Gastrocnemius medialis (tissue), 4 donors: ENCODE measurements at regions of chr5 and their contacts with region 1.

Region 1: DNA sequence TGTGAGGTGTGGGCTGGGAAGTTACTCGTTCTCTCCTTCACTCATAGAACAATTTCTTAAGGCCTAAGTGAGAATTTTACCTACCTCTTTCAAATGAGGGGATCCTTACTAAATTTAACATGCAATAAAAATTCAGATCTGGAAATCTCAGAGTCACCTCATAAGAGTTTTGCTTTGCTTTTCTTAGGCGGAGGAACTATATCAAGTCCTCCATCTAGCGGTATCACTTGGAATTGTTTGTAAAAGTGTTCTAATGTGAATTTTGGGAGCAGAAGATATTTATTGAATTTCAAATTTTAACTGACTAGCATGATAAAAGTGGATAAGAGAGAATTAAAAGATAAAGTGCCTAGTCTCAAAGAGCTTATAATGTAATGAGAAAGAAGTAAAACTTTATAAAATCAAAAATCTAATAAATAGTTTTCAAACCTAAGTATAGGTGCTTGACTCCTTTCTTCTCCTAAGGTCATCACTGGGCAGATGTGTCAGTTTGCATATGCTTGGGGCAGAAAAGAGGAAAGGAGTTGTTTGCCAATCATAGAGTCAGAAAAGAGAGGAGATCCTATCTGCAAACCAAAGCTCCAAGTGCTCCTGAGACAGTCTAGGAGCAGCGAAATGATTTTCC is 145.7 kb upstream of the DAB2 start:
- DNase-seq: no peak
- ATAC-seq: no peak
- H3K4me3 ChIP-seq: no peak overlapping the region
- H3K27ac ChIP-seq: no peak overlapping the region
- H3K4me1 ChIP-seq: no peaks in the 10 kb centered on the region
- H3K27me3 ChIP-seq: no peaks in the 10 kb centered on the region
- CTCF ChIP-seq: peak in 4 of 5 experiments; percentile 41 to 63 (median 52)
- POLR2A ChIP-seq: no peak

Region 2: DNA sequence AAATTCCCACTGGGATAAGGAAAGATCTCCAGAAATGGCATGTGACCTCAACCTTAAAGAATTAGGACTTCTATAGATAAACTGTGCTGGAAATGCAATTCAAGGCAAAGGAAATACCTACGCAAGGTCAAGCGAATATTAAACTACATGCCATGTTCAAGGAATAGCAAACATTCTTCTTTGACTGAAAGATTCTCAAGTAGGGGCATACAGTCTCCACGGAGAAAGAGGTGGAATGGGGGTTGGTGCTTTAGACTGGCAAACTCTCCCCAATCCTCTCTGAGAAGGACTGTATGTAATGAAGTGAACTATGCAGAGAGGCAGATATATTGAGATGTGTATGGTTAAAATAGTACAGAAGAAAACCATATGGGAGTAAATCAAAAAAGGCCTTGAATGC is 502.4 kb before region 1 on chr5:
- in situ Hi-C with region 1: no loop called
- intact Hi-C with region 1: loop called (anchors 5 kb)
- DNase-seq: no peak
- ATAC-seq: no peak
- H3K4me3 ChIP-seq: no peak overlapping the region
- H3K27ac ChIP-seq: no peak overlapping the region
- H3K4me1 ChIP-seq: peaks cover 58 to 64% of the 10 kb centered on the region in 2 donors
- H3K27me3 ChIP-seq: no peaks in the 10 kb centered on the region
- CTCF ChIP-seq: no peak
- POLR2A ChIP-seq: no peak

Region 3: GRCh38 chr5:39543335-39543734 is 27.2 kb before region 1 on chr5:
- in situ Hi-C with region 1: no loop called
- intact Hi-C with region 1: no loop called
- DNase-seq: no peak
- ATAC-seq: no peak
- H3K4me3 ChIP-seq: no peak overlapping the region
- H3K27ac ChIP-seq: no peak overlapping the region
- H3K4me1 ChIP-seq: peaks cover 0 to 3% of the 10 kb centered on the region in 2 donors
- H3K27me3 ChIP-seq: no peaks in the 10 kb centered on the region
- CTCF ChIP-seq: no peak
- POLR2A ChIP-seq: no peak

Region 4: DNA sequence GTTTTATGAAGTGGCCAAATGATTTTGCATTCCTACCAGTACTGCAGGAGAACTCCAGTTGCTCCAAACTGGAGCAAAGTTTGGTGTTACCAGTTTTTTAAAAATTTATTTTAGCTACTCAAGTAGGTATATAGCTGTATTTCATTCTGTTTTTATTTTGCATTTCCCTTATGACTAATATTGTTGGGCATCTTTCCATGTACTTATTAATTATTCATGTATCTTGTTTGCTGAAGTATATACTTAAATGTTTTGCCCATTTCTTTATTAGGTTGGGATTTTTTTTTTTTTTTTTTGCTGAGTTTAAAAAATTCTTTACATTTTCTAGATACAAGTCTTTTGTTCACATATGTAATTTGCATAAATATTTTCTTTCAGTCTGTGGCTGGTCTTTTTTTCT is 240.9 kb after region 1 on chr5:
- in situ Hi-C with region 1: no loop called
- intact Hi-C with region 1: no loop called
- DNase-seq: no peak
- ATAC-seq: no peak
- H3K4me3 ChIP-seq: no peak overlapping the region
- H3K27ac ChIP-seq: no peak overlapping the region
- H3K4me1 ChIP-seq: no peaks in the 10 kb centered on the region
- H3K27me3 ChIP-seq: no peaks in the 10 kb centered on the region
- CTCF ChIP-seq: no peak
- POLR2A ChIP-seq: no peak

Region 5: DNA sequence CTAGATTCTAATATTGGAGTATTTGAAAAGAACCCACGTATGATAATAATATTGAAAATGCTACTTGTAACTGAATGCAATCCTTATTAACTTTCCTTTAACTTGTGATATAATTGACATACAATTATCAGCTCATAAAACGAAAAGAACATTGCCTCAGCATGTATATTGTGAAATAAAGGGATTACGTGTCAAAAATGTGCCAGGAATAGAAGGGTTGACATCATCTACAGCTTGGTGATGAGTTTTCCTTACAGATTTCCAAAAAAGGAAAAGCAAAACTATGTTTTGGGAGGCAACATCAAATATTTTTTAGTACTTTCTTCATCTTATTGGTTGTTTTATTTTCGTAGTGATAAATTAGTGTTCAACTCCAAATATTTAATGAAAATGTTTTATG is 843.2 kb after region 1 on chr5:
- in situ Hi-C with region 1: no loop called
- intact Hi-C with region 1: no loop called
- DNase-seq: no peak
- ATAC-seq: no peak
- H3K4me3 ChIP-seq: no peak overlapping the region
- H3K27ac ChIP-seq: no peak overlapping the region
- H3K4me1 ChIP-seq: peaks cover 0 to 7% of the 10 kb centered on the region in 2 donors
- H3K27me3 ChIP-seq: no peaks in the 10 kb centered on the region
- CTCF ChIP-seq: no peak
- POLR2A ChIP-seq: no peak

Region 6: DNA sequence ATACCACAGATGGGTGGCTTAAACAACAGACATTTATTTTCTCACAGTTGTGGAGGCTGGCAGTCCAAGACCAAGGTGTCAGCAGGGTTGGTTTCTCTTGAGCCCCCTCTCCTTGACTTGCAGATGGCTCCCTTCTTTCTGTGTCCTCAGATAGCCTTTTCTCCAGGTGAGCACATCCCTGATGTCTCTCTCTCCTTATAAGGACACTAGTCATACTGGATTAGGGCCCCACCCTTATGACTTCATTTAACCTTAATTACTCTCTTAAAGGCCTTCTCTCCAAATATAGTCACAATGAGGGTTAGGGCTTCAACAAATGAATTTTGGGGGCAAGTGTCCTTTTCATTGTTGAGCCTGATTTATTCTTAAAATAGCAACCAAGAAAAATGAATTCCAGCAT is 1123.9 kb after region 1 on chr5:
- in situ Hi-C with region 1: loop called in 3 of 4 experiments (anchors 5 to 25 kb)
- intact Hi-C with region 1: no loop called
- DNase-seq: no peak
- ATAC-seq: no peak
- H3K4me3 ChIP-seq: no peak overlapping the region
- H3K27ac ChIP-seq: no peak overlapping the region
- H3K4me1 ChIP-seq: peaks cover 4 to 9% of the 10 kb centered on the region in 2 donors
- H3K27me3 ChIP-seq: no peaks in the 10 kb centered on the region
- CTCF ChIP-seq: no peak
- POLR2A ChIP-seq: no peak